CD4-positive, alpha-beta T cell (primary cell): ENCODE measurements at regions of chr12 and their contacts with region 1.

Region 1: DNA sequence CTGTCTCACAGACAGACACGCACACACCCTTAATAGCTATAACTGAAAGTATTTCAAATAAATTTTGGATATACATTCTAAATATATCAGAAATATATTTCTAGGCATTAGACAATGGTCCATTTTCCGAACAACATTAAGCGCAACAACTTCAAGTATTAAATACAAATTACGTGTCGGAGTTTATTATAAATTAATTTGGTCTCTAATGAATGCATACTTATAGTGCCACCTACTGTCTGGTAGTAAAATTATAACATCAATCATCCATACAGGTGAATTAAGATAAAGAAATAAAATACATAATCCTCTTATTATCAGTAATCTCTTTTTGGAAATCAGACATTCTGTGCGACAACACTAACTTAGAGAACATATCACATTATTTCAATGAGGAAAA is 27.2 kb upstream of the CMAS start:
- DNase-seq: peak in 3 of 14 experiments; percentile 11 to 31 (median 24)
- ATAC-seq: no peak
- H3K4me3 ChIP-seq: no peak overlapping the region
- H3K4me3 Mint-ChIP-seq: no peak overlapping the region
- H3K27ac ChIP-seq: no peak overlapping the region
- H3K27ac Mint-ChIP-seq: no peak overlapping the region
- H3K4me1 ChIP-seq: no peaks in the 10 kb centered on the region
- H3K4me1 Mint-ChIP-seq: no peaks in the 10 kb centered on the region
- H3K27me3 ChIP-seq: no peaks in the 10 kb centered on the region
- H3K27me3 Mint-ChIP-seq: peaks cover 13% of the 10 kb centered on the region
- CTCF ChIP-seq: peak; percentile 78

Region 2: GRCh38 chr12:20463913-20464524 is 1554.8 kb before region 1 on chr12:
- CTCF ChIA-PET with region 1: no interaction called
- POLR2A ChIA-PET with region 1: no interaction called
- intact Hi-C with region 1: loop called (anchors 10 kb)
- DNase-seq: no peak
- ATAC-seq: no peak
- H3K4me3 ChIP-seq: no peak overlapping the region
- H3K4me3 Mint-ChIP-seq: no peak overlapping the region
- H3K27ac ChIP-seq: no peak overlapping the region
- H3K27ac Mint-ChIP-seq: no peak overlapping the region
- H3K4me1 ChIP-seq: no peaks in the 10 kb centered on the region
- H3K4me1 Mint-ChIP-seq: no peaks in the 10 kb centered on the region
- H3K27me3 ChIP-seq: no peaks in the 10 kb centered on the region
- H3K27me3 Mint-ChIP-seq: no peaks in the 10 kb centered on the region
- CTCF ChIP-seq: peak; percentile 59

Region 3: DNA sequence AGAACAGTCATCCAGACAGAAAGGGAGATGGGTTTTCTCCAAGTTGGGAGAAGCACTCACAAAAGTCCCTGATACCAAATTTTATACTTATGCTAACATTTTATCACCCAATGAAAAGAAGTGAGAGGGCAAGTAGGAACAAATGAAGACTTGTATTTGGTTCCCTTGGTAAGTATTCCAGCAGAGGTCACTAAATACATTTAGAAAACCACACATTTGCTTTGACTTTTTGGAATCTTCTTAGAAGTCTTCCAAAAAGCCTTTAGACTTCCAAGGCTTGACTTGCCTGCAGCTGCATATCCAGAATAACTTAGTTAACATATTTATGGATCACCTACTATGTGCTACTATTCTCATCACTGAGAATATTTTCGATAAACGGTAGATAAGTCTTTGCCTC is 411.2 kb before region 1 on chr12:
- CTCF ChIA-PET with region 1: no interaction called
- POLR2A ChIA-PET with region 1: no interaction called
- intact Hi-C with region 1: loop called (anchors 5 to 10 kb)
- DNase-seq: peak in 3 of 14 experiments; percentile 54 to 60 (median 59)
- ATAC-seq: peak; percentile 58
- H3K4me3 ChIP-seq: no peak overlapping the region
- H3K4me3 Mint-ChIP-seq: no peak overlapping the region
- H3K27ac ChIP-seq: no peak overlapping the region
- H3K27ac Mint-ChIP-seq: no peak overlapping the region
- H3K4me1 ChIP-seq: peaks cover 3% of the 10 kb centered on the region
- H3K4me1 Mint-ChIP-seq: peaks cover 7% of the 10 kb centered on the region
- H3K27me3 ChIP-seq: no peaks in the 10 kb centered on the region
- H3K27me3 Mint-ChIP-seq: no peaks in the 10 kb centered on the region
- CTCF ChIP-seq: peak; percentile 76

Region 4: DNA sequence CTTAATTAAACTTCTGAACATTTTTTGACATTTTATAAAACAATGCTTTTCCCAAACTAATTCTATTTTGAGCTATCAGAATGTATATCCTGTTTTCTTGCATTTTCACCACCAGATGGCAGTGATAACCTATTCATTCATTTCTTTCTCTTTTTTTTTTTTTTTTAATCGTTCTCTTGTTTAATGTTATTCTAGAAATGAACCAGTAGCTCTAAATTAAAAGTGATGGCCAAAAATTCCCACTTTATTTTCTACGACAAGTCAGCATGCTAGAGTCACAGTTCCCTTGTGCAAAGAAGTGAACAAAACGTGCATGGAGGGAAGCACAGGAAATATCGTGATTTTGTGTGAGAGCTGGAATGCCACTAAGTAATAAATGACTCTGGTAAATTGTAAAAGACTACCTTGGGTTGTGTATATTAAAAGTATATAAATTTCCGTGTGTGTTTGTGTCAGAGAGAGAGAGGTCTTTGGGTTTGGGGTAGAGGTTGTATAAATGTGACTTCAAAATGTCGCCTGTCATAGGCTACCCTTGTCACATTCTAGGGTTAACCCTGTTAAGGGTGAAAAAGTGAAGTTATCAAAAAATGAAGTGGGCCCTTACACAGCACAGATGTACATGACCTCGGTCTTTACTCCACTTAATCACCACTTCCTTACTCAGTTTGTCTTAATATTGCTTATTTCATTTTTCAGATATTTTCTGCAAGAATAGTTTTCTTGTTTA is 320.8 kb before region 1 on chr12:
- CTCF ChIA-PET with region 1: no interaction called
- POLR2A ChIA-PET with region 1: interaction called, 5 read pairs
- intact Hi-C with region 1: loop called (anchors 1 to 2 kb)
- DNase-seq: peak in 3 of 14 experiments; percentile 50 to 69 (median 69)
- ATAC-seq: no peak
- H3K4me3 ChIP-seq: no peak overlapping the region
- H3K4me3 Mint-ChIP-seq: peak overlapping the region; percentile 27
- H3K27ac ChIP-seq: no peak overlapping the region
- H3K27ac Mint-ChIP-seq: no peak overlapping the region
- H3K4me1 ChIP-seq: peaks cover 2% of the 10 kb centered on the region
- H3K4me1 Mint-ChIP-seq: peaks cover 27% of the 10 kb centered on the region
- H3K27me3 ChIP-seq: no peaks in the 10 kb centered on the region
- H3K27me3 Mint-ChIP-seq: peaks cover 5% of the 10 kb centered on the region
- CTCF ChIP-seq: peak; percentile 80